CD4-positive, alpha-beta memory T cell (primary cell): ENCODE measurements at regions of chr17 and their contacts with region 1.

Region 1: DNA sequence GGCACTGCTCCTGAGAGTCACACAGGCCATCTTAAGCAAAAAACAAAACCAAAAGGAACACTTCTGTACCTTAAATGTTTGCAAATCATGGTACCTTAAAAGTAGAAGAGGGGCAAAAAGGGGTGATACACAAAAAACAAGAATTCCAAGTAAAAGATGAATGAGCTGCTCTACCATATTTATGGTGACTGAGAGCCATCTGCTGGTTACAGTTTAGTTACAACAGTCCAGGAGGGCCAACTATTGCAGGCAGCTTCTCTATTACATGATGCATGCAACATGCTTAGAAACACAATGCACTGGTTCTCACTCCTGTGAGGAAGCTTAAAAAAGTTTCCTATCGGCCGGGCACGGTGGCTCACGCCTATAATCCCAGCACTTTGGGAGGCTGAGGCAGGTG is 53.5 kb downstream of the STX8 start:
- DNase-seq: peak in 4 of 5 donors; percentile 3 to 26 (median 17)
- H3K4me3 ChIP-seq: no peak overlapping the region
- H3K4me3 Mint-ChIP-seq: no peak overlapping the region
- H3K27ac ChIP-seq: no peak overlapping the region
- H3K27ac Mint-ChIP-seq: no peak overlapping the region
- H3K4me1 ChIP-seq: peaks cover 11% of the 10 kb centered on the region
- H3K4me1 Mint-ChIP-seq: peaks cover 13 to 25% (median 23%) of the 10 kb centered on the region in 4 donors
- H3K27me3 ChIP-seq: no peaks in the 10 kb centered on the region
- H3K27me3 Mint-ChIP-seq: no peaks in the 10 kb centered on the region

Region 2: GRCh38 chr17:8991514-8992285 is 530.4 kb before region 1 on chr17:
- CTCF ChIA-PET with region 1: no interaction called
- POLR2A ChIA-PET with region 1: no interaction called
- intact Hi-C with region 1: loop called (anchors 5 kb)
- DNase-seq: peak; percentile 56 to 71 (median 60)
- H3K4me3 ChIP-seq: no peak overlapping the region
- H3K4me3 Mint-ChIP-seq: no peak overlapping the region
- H3K27ac ChIP-seq: no peak overlapping the region
- H3K27ac Mint-ChIP-seq: peak overlapping the region in 2 of 7 donors; percentile 7 to 24
- H3K4me1 ChIP-seq: peaks cover 5% of the 10 kb centered on the region
- H3K4me1 Mint-ChIP-seq: peaks cover 4 to 10% (median 7%) of the 10 kb centered on the region in 4 donors
- H3K27me3 ChIP-seq: no peaks in the 10 kb centered on the region
- H3K27me3 Mint-ChIP-seq: peaks cover 2 to 4% of the 10 kb centered on the region in 2 donors

Region 3: DNA sequence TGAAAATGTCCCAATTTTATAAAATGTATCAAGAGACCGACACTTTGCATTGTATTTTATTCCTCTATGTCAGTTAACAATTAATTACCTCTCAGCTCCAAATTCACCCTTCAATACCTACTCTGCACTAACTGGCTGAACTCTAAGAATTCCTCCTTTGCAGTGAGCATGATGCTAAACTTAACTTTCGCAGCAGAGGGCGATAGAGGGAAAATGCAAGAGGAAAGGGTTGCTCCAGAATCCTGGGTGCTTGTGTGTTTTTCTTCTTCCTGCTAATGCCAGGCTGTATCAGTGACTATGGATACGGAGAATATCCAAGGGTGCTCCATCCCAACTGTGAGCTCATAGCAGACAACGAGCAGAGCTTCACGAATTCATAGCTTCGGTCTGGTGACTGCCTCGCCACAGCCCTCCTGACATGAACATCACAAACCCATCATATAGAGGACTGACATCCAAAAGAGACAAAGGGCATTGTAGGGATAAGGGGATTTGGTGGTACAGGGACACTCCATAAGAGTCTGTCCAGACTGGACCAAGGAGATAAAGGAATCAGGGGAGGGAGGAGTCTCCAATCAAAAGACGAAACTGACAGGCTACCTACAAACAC is 119.4 kb before region 1 on chr17:
- CTCF ChIA-PET with region 1: interaction called, 7 read pairs
- POLR2A ChIA-PET with region 1: no interaction called
- intact Hi-C with region 1: loop called (anchors 1 kb)
- DNase-seq: peak in 3 of 5 donors; percentile 6 to 31 (median 8)
- H3K4me3 ChIP-seq: no peak overlapping the region
- H3K4me3 Mint-ChIP-seq: no peak overlapping the region
- H3K27ac ChIP-seq: no peak overlapping the region
- H3K27ac Mint-ChIP-seq: no peak overlapping the region
- H3K4me1 ChIP-seq: no peaks in the 10 kb centered on the region
- H3K4me1 Mint-ChIP-seq: peaks cover 0 to 3% (median under 1%) of the 10 kb centered on the region in 4 donors
- H3K27me3 ChIP-seq: no peaks in the 10 kb centered on the region
- H3K27me3 Mint-ChIP-seq: no peaks in the 10 kb centered on the region

Region 4: GRCh38 chr17:9444687-9445086 is 77.4 kb before region 1 on chr17:
- CTCF ChIA-PET with region 1: no interaction called
- POLR2A ChIA-PET with region 1: no interaction called
- intact Hi-C with region 1: no loop called
- DNase-seq: no peak
- H3K4me3 ChIP-seq: no peak overlapping the region
- H3K4me3 Mint-ChIP-seq: no peak overlapping the region
- H3K27ac ChIP-seq: no peak overlapping the region
- H3K27ac Mint-ChIP-seq: no peak overlapping the region
- H3K4me1 ChIP-seq: no peaks in the 10 kb centered on the region
- H3K4me1 Mint-ChIP-seq: peaks cover 0 to 3% (median 0%) of the 10 kb centered on the region in 4 donors
- H3K27me3 ChIP-seq: no peaks in the 10 kb centered on the region
- H3K27me3 Mint-ChIP-seq: no peaks in the 10 kb centered on the region